ENCODE measurements at regions of chr12 and their contacts with region 1.

Region 1: GRCh38 chr12:132600048-132601032 is 10.0 kb downstream of the LRCOL1 start:
- DNase-seq: peak in 6 of 14 experiments; percentile 13 to 65 (median 52)
- ATAC-seq: peak; percentile 42
- H3K4me3 ChIP-seq: peak overlapping the region; percentile 54
- H3K4me3 Mint-ChIP-seq: peak overlapping the region; percentile 84
- H3K27ac ChIP-seq: no peak overlapping the region
- H3K27ac Mint-ChIP-seq: no peak overlapping the region
- H3K4me1 ChIP-seq: peaks cover 34% of the 10 kb centered on the region
- H3K4me1 Mint-ChIP-seq: peaks cover 27% of the 10 kb centered on the region
- H3K27me3 ChIP-seq: peaks cover 28 to 31% of the 10 kb centered on the region in 2 experiments
- H3K27me3 Mint-ChIP-seq: peaks cover 33% of the 10 kb centered on the region
- CTCF ChIP-seq: peak; percentile 43

Region 2: GRCh38 chr12:132614861-132615578 is 14.7 kb after region 1 on chr12:
- CTCF ChIA-PET with region 1: interaction called, 11 read pairs
- POLR2A ChIA-PET with region 1: no interaction called
- intact Hi-C with region 1: no loop called
- DNase-seq: peak; percentile 66 to 90 (median 74)
- ATAC-seq: peak; percentile 86
- H3K4me3 ChIP-seq: no peak overlapping the region
- H3K4me3 Mint-ChIP-seq: no peak overlapping the region
- H3K27ac ChIP-seq: no peak overlapping the region
- H3K27ac Mint-ChIP-seq: no peak overlapping the region
- H3K4me1 ChIP-seq: peaks cover 17% of the 10 kb centered on the region
- H3K4me1 Mint-ChIP-seq: peaks cover 17% of the 10 kb centered on the region
- H3K27me3 ChIP-seq: peaks cover 38 to 43% of the 10 kb centered on the region in 2 experiments
- H3K27me3 Mint-ChIP-seq: peaks cover 48% of the 10 kb centered on the region
- CTCF ChIP-seq: peak; percentile 94

Region 3: GRCh38 chr12:132638541-132639418 is 38.4 kb after region 1 on chr12:
- CTCF ChIA-PET with region 1: no interaction called
- POLR2A ChIA-PET with region 1: no interaction called
- intact Hi-C with region 1: no loop called
- DNase-seq: peak in 2 of 14 experiments; percentile 18
- ATAC-seq: no peak
- H3K4me3 ChIP-seq: no peak overlapping the region
- H3K4me3 Mint-ChIP-seq: no peak overlapping the region
- H3K27ac ChIP-seq: no peak overlapping the region
- H3K27ac Mint-ChIP-seq: no peak overlapping the region
- H3K4me1 ChIP-seq: no peaks in the 10 kb centered on the region
- H3K4me1 Mint-ChIP-seq: no peaks in the 10 kb centered on the region
- H3K27me3 ChIP-seq: no peaks in the 10 kb centered on the region
- H3K27me3 Mint-ChIP-seq: no peaks in the 10 kb centered on the region
- CTCF ChIP-seq: peak; percentile 59